ENCODE measurements at regions of chr6 and their contacts with region 1.

Region 1: GRCh38 chr6:13814176-13814937 is at the start of gene MCUR1:
- DNase-seq: peak; percentile 51 to 92 (median 74)
- ATAC-seq: peak; percentile 80
- H3K4me3 ChIP-seq: peak within 1 kb of the TSS; percentile 71
- H3K4me3 Mint-ChIP-seq: peak within 1 kb of the TSS; percentile 87
- H3K27ac ChIP-seq: peak within 1 kb of the TSS; percentile 61 to 76
- H3K27ac Mint-ChIP-seq: peak within 1 kb of the TSS; percentile 85
- H3K4me1 ChIP-seq: peaks cover 14% of the 10 kb centered on the region
- H3K4me1 Mint-ChIP-seq: peaks cover 34% of the 10 kb centered on the region
- H3K27me3 ChIP-seq: no peaks in the 10 kb centered on the region
- H3K27me3 Mint-ChIP-seq: no peaks in the 10 kb centered on the region
- CTCF ChIP-seq: no peak
- total RNA-seq, gene MCUR1: 2.1 to 3.4 TPM

Region 2: GRCh38 chr6:13767121-13767808 is 47.1 kb before region 1 on chr6:
- CTCF ChIA-PET with region 1: no interaction called
- POLR2A ChIA-PET with region 1: no interaction called
- intact Hi-C with region 1: no loop called
- DNase-seq: peak; percentile 11 to 77 (median 53)
- ATAC-seq: peak; percentile 83
- H3K4me3 ChIP-seq: peak overlapping the region; percentile 16 to 21
- H3K4me3 Mint-ChIP-seq: peak overlapping the region; percentile 73
- H3K27ac ChIP-seq: no peak overlapping the region
- H3K27ac Mint-ChIP-seq: no peak overlapping the region
- H3K4me1 ChIP-seq: peaks cover 18% of the 10 kb centered on the region
- H3K4me1 Mint-ChIP-seq: peaks cover 33% of the 10 kb centered on the region
- H3K27me3 ChIP-seq: no peaks in the 10 kb centered on the region
- H3K27me3 Mint-ChIP-seq: no peaks in the 10 kb centered on the region
- CTCF ChIP-seq: peak; percentile 10

Region 3: DNA sequence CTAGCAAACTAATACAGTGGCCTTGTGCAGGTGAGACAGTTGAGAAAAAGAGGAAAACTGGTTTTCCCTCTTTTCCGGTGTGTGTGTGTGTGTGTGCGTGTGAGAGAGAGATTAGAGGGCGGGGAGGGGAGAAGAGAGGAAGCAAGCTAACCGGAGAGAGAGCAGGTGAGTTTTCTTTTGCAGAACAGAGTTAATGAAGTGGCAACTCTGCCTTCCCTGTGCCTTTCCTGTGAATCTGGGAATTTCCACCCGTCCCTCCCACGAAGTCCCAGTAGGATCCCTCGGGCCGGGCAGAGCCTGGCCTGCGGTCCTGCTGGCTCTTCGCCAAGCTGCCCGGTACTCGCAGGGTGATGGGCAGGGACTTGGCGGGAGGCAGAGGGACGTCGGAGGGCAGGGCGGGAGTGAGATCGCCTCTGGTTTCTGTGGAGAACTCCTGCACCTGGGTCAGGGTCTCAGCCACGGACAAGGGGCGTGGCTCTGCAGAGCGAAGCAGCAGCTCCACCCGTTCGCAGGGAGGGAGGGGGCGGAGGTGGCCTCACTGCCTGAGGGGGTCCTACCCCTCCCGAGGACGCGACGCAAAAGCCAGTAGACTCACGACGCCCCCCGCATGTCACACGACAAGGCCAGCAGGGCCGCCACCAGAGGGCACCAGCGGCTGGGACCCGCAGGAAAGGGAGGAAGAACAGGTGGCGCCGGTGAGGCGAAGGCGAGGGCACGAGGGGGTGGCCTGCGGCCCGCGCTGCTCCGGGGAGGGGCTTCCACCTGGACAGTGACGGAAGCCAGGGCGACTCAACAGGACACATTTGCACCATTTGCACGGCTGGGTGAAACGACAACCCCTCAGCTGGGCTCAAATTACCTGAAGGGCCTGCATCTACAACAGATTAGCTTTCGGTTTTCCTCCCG is 59.2 kb after region 1 on chr6:
- CTCF ChIA-PET with region 1: interaction called, 6 read pairs
- POLR2A ChIA-PET with region 1: interaction called, 3 read pairs
- intact Hi-C with region 1: loop called in 1 of 2 experiments (anchors 5 kb)
- DNase-seq: peak; percentile 47 to 84 (median 77)
- ATAC-seq: peak; percentile 93
- H3K4me3 ChIP-seq: peak overlapping the region; percentile 40 to 44
- H3K4me3 Mint-ChIP-seq: peak overlapping the region; percentile 83
- H3K27ac ChIP-seq: no peak overlapping the region
- H3K27ac Mint-ChIP-seq: no peak overlapping the region
- H3K4me1 ChIP-seq: peaks cover 7% of the 10 kb centered on the region
- H3K4me1 Mint-ChIP-seq: peaks cover 15% of the 10 kb centered on the region
- H3K27me3 ChIP-seq: no peaks in the 10 kb centered on the region
- H3K27me3 Mint-ChIP-seq: peaks cover under 1% of the 10 kb centered on the region
- CTCF ChIP-seq: peak; percentile 67

Region 4: DNA sequence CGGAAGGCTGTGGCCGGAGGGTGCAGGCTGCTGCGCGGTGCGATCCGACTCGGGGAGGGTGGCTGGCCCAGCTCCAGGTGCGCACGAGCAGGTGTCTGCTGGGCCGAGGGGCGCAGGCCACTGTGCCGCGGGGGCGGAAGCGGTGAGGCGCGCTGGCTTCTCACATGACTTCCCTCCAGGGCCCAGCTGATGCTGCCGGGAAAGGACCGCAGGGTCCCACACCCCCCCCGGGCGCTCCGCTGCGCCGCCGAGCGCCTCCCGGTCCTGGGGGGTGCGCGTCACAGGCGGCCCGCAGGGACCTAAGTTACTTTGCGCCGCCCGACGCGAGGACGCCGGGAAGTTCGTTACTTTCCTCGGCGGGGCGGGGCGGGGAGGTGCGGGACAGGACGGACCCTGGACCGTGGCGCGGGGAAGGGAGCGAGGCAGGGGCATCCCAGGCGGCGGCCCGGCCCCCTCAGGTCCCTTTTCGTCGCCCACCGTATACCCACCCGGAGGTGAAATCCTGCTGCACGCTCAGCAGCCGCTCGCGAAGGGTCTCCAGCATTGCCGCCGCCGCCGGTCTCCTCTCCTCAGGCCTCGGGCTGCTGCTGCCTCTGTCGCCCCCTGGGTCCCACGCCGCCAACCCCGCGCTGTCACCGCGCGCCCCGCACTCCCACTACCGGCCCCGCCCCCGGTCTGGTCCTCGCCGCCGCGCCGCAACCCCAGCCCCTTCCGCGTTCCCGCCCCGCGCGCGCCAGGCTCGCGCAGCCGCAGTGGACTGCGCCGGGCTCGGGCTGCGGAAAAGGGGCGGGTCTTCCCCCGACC is 1848.2 kb after region 1 on chr6 and contains the start of gene DTNBP1:
- CTCF ChIA-PET with region 1: no interaction called
- POLR2A ChIA-PET with region 1: no interaction called
- intact Hi-C with region 1: loop called in 1 of 2 experiments (anchors 2 kb)
- DNase-seq: peak; percentile 58 to 90 (median 82)
- ATAC-seq: peak; percentile 73
- H3K4me3 ChIP-seq: peak within 1 kb of the TSS; percentile 67 to 76
- H3K4me3 Mint-ChIP-seq: peak within 1 kb of the TSS; percentile 83
- H3K27ac ChIP-seq: peak within 1 kb of the TSS; percentile 55 to 73
- H3K27ac Mint-ChIP-seq: peak within 1 kb of the TSS; percentile 73
- H3K4me1 ChIP-seq: peaks cover 7% of the 10 kb centered on the region
- H3K4me1 Mint-ChIP-seq: peaks cover 41% of the 10 kb centered on the region
- H3K27me3 ChIP-seq: no peaks in the 10 kb centered on the region
- H3K27me3 Mint-ChIP-seq: peaks cover 2% of the 10 kb centered on the region
- CTCF ChIP-seq: no peak
- total RNA-seq, gene DTNBP1: 12.3 to 12.6 TPM

Measured in CD8-positive, alpha-beta T cell (primary cell).